ENCODE measurements at regions of chr6 and their contacts with region 1.

Region 1: GRCh38 chr6:41027799-41028628 is 11.0 kb downstream of the UNC5CL start:
- DNase-seq: peak; percentile 53
- H3K4me3 ChIP-seq: peak overlapping the region; percentile 31
- H3K27ac ChIP-seq: no peak overlapping the region
- H3K4me1 ChIP-seq: no peaks in the 10 kb centered on the region
- H3K27me3 ChIP-seq: no peaks in the 10 kb centered on the region
- CTCF ChIP-seq: peak; percentile 99

Region 2: DNA sequence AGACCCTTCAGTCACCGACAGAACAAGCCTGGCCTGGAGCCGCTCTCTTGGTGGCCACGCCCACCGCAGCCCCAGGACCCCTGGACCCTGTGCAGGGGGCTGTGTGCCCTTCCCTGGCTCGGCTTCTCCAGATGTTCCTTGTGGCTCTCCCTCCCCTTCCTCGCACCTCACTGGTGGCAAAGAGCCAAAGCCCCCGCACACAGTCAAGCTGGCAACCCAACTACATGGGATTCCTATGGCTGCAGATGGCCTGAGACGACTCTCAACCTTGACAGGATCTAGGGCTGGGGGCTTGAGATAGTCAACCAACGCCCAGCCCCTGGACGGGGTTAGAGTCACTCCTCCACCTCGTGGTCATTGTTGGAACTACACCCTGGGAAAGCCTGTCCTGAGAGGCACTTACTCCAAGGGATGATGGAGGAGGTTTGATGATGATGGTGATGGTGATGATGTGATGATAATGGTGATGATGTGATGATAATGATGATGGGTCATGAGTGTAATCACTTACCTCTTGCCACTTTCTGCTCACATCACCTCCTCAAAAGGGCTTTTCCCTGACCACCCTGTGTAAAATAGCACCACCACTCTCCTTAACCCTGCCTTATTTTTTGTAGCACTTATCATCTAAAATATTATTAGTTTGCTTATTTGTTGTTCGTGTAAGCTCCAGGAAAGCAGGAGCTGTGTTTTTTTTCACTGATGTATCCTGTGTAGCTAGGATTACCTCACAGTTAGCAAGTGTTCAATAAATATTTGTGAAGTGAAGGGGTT is 719.3 kb before region 1 on chr6:
- CTCF ChIA-PET with region 1: no interaction called
- POLR2A ChIA-PET with region 1: no interaction called
- intact Hi-C with region 1: loop called (anchors 10 kb)
- DNase-seq: peak; percentile 83
- H3K4me3 ChIP-seq: no peak overlapping the region
- H3K27ac ChIP-seq: no peak overlapping the region
- H3K4me1 ChIP-seq: no peaks in the 10 kb centered on the region
- H3K27me3 ChIP-seq: no peaks in the 10 kb centered on the region
- CTCF ChIP-seq: peak; percentile 90

Region 3: GRCh38 chr6:40894962-40895799 is 132.8 kb before region 1 on chr6:
- CTCF ChIA-PET with region 1: no interaction called
- POLR2A ChIA-PET with region 1: no interaction called
- intact Hi-C with region 1: loop called (anchors 1 kb)
- DNase-seq: peak; percentile 75
- H3K4me3 ChIP-seq: no peak overlapping the region
- H3K27ac ChIP-seq: no peak overlapping the region
- H3K4me1 ChIP-seq: no peaks in the 10 kb centered on the region
- H3K27me3 ChIP-seq: no peaks in the 10 kb centered on the region
- CTCF ChIP-seq: peak; percentile 60

Region 4: DNA sequence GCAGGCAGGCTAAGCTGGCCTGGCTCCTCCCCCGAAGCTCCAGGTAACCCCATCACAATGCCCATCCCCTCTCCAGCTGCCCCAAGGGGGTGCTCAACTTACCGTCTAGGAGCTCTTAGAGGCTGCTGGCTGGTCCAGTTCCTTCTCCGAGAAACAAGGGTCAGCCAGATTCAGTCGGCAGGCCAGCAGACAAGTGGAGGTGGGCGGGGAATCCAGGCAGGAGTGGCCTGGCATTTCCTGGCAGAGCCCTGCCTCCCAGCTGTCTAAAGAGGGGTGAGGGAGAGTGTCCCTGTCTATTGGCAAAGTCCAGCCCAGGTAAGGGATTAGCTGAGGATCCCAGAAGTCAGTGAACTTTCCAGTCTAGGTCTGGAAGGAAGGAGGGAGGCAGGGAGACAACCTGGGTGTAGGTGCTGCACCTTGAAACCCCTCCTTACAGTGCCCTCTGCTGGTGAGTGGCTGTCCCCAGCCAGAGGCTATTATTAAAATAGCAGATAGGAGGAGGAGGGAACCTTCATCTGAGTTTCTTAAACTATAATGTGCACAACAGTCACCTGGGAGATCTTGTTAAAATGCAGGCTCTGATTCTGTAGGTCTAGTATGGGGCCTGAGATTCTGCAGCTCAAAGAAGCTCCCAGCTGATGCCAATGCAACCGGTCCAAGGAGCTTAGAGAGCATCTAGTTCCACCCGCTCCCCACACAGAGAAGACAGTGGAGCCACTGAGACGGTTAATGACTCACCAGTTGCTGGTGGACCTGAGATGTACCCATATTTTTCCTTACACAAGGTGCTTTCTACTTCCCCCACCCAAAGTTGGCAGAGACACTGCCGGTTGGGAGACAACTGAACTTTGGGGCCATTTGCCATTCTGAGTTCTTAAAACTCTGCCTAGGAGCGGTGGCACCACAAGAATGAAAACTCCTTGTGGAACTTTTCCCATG is 11.3 kb after region 1 on chr6 and contains the start of gene UNC5CL:
- CTCF ChIA-PET with region 1: no interaction called
- POLR2A ChIA-PET with region 1: no interaction called
- intact Hi-C with region 1: no loop called
- DNase-seq: peak; percentile 48
- H3K4me3 ChIP-seq: no peak within 1 kb of the TSS
- H3K27ac ChIP-seq: no peak within 1 kb of the TSS
- H3K4me1 ChIP-seq: no peaks in the 10 kb centered on the region
- H3K27me3 ChIP-seq: no peaks in the 10 kb centered on the region
- CTCF ChIP-seq: peak; percentile 93
- total RNA-seq, gene UNC5CL: 0.41 and 1.2 TPM in 2 replicates

Region 5: DNA sequence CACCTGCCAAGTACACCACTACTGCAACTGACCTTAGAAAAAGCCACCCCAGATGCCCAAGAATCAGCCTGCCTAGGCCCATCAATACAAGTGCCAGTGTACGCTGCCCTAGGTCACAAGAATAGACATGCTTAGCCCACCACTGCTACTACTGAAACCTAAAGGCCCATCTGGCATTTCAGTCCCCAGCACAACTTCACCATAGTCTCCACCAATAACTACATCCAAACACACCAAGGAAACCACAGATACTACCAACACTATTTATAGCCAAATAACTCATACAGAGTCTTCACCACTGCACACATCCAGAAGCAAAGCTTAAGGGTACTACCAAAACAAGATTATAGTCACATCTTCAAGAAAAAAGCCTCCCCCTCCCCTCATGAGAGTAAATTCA is 228.4 kb after region 1 on chr6:
- CTCF ChIA-PET with region 1: interaction called, 12 read pairs
- POLR2A ChIA-PET with region 1: no interaction called
- intact Hi-C with region 1: no loop called
- DNase-seq: no peak
- H3K4me3 ChIP-seq: no peak overlapping the region
- H3K27ac ChIP-seq: peak overlapping the region; percentile 90
- H3K4me1 ChIP-seq: peaks cover 44% of the 10 kb centered on the region
- H3K27me3 ChIP-seq: no peaks in the 10 kb centered on the region
- CTCF ChIP-seq: no peak